Aorta (tissue), 5 donors: ENCODE measurements at regions of chr2 and their contacts with region 1.

Region 1: GRCh38 chr2:68031542-68032160 is 31.2 kb downstream of the C1D start:
- DNase-seq: no peak
- ATAC-seq: peak; percentile 64
- H3K4me3 ChIP-seq: no peak overlapping the region
- H3K27ac ChIP-seq: no peak overlapping the region
- H3K4me1 ChIP-seq: no peaks in the 10 kb centered on the region
- H3K27me3 ChIP-seq: no peaks in the 10 kb centered on the region

Region 2: DNA sequence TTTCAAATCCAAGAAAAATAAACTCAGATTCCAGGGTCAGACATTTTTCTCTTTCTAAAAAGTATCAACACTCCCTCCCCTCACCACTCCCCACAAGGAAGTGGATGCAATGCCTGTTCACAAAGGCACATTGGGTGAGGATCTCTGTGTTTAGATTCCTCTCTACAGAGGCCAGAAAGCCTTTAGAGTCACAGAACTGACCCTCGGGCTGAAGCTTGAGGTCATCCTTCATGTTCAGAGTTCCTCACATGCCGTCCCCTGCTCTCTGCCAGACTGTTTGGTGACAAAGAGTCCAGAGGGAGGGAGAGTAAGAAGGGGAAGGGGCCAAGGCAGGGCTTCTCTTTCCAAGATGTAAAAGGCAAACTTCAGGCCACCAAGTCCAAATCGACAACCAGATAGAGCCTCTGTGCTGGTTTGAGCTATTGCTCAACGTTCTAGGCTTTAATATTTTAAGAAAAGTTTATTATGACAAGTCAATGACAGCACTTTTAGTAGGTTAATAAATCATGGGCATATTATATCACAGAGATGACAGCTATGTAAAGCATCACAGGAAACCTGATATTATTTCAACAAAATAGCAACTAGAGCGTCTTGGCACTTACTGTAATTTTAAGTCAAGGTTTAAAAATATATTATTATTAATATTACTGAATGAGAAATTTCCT is 365.1 kb before region 1 on chr2:
- intact Hi-C with region 1: loop called in 1 of 2 experiments (anchors 10 kb)
- DNase-seq: peak in 1 of 2 donors; percentile 68
- ATAC-seq: peak; percentile 76
- H3K4me3 ChIP-seq: no peak overlapping the region
- H3K27ac ChIP-seq: peak overlapping the region; percentile 49 to 60
- H3K4me1 ChIP-seq: peaks cover 2 to 5% of the 10 kb centered on the region in 2 donors
- H3K27me3 ChIP-seq: no peaks in the 10 kb centered on the region

Region 3: GRCh38 chr2:67846370-67847070 is 185.1 kb before region 1 on chr2:
- intact Hi-C with region 1: loop called (anchors 2 to 5 kb)
- DNase-seq: peak; percentile 82 to 83
- ATAC-seq: peak; percentile 73
- H3K4me3 ChIP-seq: no peak overlapping the region
- H3K27ac ChIP-seq: no peak overlapping the region
- H3K4me1 ChIP-seq: peaks cover 0 to 1% of the 10 kb centered on the region in 2 donors
- H3K27me3 ChIP-seq: no peaks in the 10 kb centered on the region